Right ventricle myocardium inferior (tissue), 1 donor: ENCODE measurements at regions of chr1 and their contacts with region 1.

Region 1: GRCh38 chr1:45750298-45751038 is at the start of gene IPP:
- DNase-seq: peak; percentile 99
- ATAC-seq: peak; percentile 99
- total RNA-seq, gene IPP: 11.6 TPM

Region 2: GRCh38 chr1:45803301-45803780 is 52.9 kb after region 1 on chr1 and contains the start of gene MAST2:
- intact Hi-C with region 1: loop called (anchors 5 kb)
- DNase-seq: peak; percentile 96
- ATAC-seq: peak; percentile 98
- total RNA-seq, gene MAST2: 100 TPM

Region 3: DNA sequence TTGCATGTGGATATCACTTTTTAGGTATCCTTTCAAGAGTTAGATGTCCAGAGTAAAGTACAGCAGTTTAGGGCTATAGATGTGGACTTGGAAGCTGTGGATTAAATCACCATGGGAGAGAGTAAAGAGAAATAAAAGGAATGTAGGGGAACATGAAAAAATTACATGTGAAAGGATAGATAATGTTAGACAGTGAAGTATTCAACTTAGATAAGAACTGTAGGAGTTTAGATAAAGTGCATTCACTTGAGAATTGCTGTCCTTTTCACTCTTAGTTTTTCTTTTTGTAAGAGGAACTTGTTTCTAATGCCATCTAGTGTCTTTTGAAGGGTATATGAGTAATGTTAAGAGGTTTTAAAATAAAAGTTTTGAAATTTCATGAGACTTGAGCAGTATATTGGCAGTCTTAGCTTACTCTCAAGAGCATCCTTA is 93.0 kb after region 1 on chr1:
- intact Hi-C with region 1: loop called (anchors 5 kb)
- DNase-seq: no peak
- ATAC-seq: peak; percentile 31

Region 4: GRCh38 chr1:46150085-46150484 is 399.6 kb after region 1 on chr1:
- intact Hi-C with region 1: no loop called
- DNase-seq: no peak
- ATAC-seq: no peak